ENCODE measurements at regions of chr9 and their contacts with region 1.

Region 1: GRCh38 chr9:2727966-2728613 is 10.8 kb downstream of the KCNV2 start:
- DNase-seq: peak; percentile 81
- H3K4me3 ChIP-seq: no peak overlapping the region
- H3K27ac ChIP-seq: no peak overlapping the region
- H3K4me1 ChIP-seq: peaks cover 33% of the 10 kb centered on the region
- H3K27me3 ChIP-seq: no peaks in the 10 kb centered on the region

Region 2: GRCh38 chr9:2144619-2145018 is 583.5 kb before region 1 on chr9:
- in situ Hi-C with region 1: loop called (anchors 5 kb)
- DNase-seq: no peak
- H3K4me3 ChIP-seq: no peak overlapping the region
- H3K27ac ChIP-seq: no peak overlapping the region
- H3K4me1 ChIP-seq: no peaks in the 10 kb centered on the region
- H3K27me3 ChIP-seq: no peaks in the 10 kb centered on the region

Measured in GM23248 (cell line).